Activated CD8-positive, alpha-beta T cell treated with anti-CD3 and anti-CD28 coated beads, Interleukin-2, amount 10 ng/mL, durations not matched to agents 7 days and 5 days (primary cell): ENCODE measurements at regions of chr6 and their contacts with region 1.

Region 1: GRCh38 chr6:26216356-26216885 is 129.2 kb downstream of the HFE start:
- DNase-seq: peak; percentile 93
- ATAC-seq: peak; percentile 67
- H3K4me3 Mint-ChIP-seq: no peak overlapping the region
- H3K27ac Mint-ChIP-seq: no peak overlapping the region
- H3K4me1 Mint-ChIP-seq: peaks cover 43% of the 10 kb centered on the region
- H3K27me3 Mint-ChIP-seq: no peaks in the 10 kb centered on the region

Region 2: DNA sequence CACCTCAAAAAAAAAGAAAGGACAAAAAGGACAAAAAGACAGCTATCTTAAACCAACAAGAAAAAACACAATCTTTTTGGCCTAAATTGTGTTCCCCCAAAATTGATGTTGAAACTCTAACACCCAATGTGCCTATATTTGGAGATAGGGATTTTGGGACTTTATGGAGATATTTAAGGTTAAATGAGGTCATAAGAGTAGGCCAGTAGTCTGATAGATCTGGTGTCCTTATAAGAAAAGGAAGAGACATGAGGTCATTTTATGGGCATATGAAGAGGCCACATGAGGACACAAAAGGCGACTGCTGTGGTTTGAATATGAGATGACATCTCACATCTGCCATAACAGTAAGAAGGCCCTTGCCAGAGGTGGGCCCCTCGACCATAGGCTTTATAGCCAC is 204.4 kb before region 1 on chr6:
- CTCF ChIA-PET with region 1: no interaction called
- POLR2A ChIA-PET with region 1: no interaction called
- DNase-seq: no peak
- ATAC-seq: no peak
- H3K4me3 Mint-ChIP-seq: no peak overlapping the region
- H3K27ac Mint-ChIP-seq: no peak overlapping the region
- H3K4me1 Mint-ChIP-seq: peaks cover 6% of the 10 kb centered on the region
- H3K27me3 Mint-ChIP-seq: no peaks in the 10 kb centered on the region

Region 3: DNA sequence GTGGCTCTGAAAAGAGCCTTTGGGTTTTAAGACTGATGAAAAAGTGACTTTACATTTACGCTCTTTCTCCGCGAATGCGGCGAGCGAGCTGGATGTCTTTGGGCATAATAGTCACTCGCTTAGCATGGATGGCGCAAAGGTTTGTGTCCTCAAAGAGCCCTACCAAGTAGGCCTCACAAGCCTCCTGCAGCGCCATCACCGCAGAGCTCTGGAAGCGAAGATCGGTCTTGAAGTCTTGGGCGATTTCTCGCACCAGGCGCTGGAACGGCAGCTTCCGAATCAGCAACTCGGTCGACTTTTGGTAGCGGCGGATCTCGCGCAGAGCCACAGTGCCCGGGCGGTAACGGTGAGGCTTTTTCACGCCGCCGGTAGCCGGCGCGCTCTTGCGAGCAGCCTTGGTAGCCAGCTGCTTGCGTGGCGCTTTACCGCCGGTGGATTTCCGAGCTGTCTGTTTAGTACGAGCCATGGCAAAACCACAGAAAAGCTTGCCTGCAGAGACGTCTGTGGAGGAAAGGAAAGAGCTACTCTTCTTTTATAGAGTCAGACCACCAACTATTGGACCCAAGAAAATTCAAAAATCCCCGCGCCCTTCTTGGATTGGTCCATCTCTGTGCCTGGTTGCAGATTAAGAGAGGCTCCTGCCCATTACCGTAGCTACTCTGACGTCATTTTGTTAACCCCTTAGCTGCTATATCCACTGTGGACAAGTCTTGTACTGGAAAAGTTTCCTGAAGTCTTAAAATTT is 184.7 kb before region 1 on chr6:
- CTCF ChIA-PET with region 1: no interaction called
- POLR2A ChIA-PET with region 1: interaction called, 90 read pairs
- DNase-seq: peak; percentile 97
- ATAC-seq: peak; percentile 66
- H3K4me3 Mint-ChIP-seq: peak overlapping the region; percentile 93
- H3K27ac Mint-ChIP-seq: peak overlapping the region; percentile 99
- H3K4me1 Mint-ChIP-seq: peaks cover 68% of the 10 kb centered on the region
- H3K27me3 Mint-ChIP-seq: peaks cover 3% of the 10 kb centered on the region

Region 4: GRCh38 chr6:26175428-26176181 is 40.8 kb before region 1 on chr6:
- CTCF ChIA-PET with region 1: interaction called, 16 read pairs
- POLR2A ChIA-PET with region 1: interaction called, 105 read pairs
- DNase-seq: peak; percentile 82
- ATAC-seq: peak; percentile 11
- H3K4me3 Mint-ChIP-seq: peak overlapping the region; percentile 38
- H3K27ac Mint-ChIP-seq: peak overlapping the region; percentile 59
- H3K4me1 Mint-ChIP-seq: peaks cover 42% of the 10 kb centered on the region
- H3K27me3 Mint-ChIP-seq: no peaks in the 10 kb centered on the region

Region 5: GRCh38 chr6:26204332-26205165 is 11.9 kb before region 1 on chr6:
- CTCF ChIA-PET with region 1: interaction called, 12 read pairs
- POLR2A ChIA-PET with region 1: interaction called, 2,224 read pairs
- DNase-seq: peak; percentile 95
- ATAC-seq: peak; percentile 66
- H3K4me3 Mint-ChIP-seq: no peak overlapping the region
- H3K27ac Mint-ChIP-seq: no peak overlapping the region
- H3K4me1 Mint-ChIP-seq: peaks cover 41% of the 10 kb centered on the region
- H3K27me3 Mint-ChIP-seq: no peaks in the 10 kb centered on the region

Region 6: GRCh38 chr6:26264547-26264946 is 48.1 kb after region 1 on chr6:
- CTCF ChIA-PET with region 1: no interaction called
- POLR2A ChIA-PET with region 1: interaction called, 232 read pairs
- DNase-seq: no peak
- ATAC-seq: no peak
- H3K4me3 Mint-ChIP-seq: no peak overlapping the region
- H3K27ac Mint-ChIP-seq: no peak overlapping the region
- H3K4me1 Mint-ChIP-seq: peaks cover 21% of the 10 kb centered on the region
- H3K27me3 Mint-ChIP-seq: no peaks in the 10 kb centered on the region

Region 7: DNA sequence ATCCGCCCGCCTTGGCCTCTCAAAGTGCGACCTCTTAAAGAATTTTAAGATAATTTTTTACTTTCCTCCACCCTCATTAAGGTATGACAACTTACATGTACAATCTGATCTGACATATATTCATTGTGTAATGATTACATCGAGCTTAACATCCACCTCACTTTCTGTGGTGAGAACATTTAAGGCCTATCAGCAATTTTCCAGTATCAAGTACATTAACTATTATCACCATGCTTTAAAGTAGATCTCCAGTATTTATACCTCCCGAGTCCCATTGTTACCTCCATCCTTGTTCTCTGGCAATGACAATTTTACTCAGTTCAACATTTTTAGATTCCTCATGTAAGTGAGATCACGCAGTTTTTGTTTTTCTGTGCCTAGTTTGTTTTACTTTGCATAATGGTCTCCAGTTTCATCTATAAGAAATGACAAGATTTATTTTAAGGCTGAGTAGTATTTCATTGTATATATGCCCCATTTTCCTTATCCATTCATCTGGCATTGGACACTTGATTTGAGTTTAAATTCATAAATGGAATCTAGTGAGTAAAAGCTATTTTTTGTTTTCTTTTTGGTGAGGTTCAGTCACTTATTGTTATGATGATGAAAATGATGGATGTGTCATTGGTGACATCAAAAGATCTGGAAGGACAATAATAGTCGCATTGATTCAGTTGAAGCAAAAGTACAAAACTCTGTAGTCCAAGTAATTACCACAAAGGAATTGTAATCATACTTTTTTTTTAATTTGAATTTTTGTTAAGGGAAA is 1608.8 kb after region 1 on chr6:
- CTCF ChIA-PET with region 1: no interaction called
- POLR2A ChIA-PET with region 1: interaction called, 12 read pairs
- DNase-seq: no peak
- ATAC-seq: peak; percentile 3
- H3K4me3 Mint-ChIP-seq: peak overlapping the region; percentile 93
- H3K27ac Mint-ChIP-seq: peak overlapping the region; percentile 99
- H3K4me1 Mint-ChIP-seq: peaks cover 45% of the 10 kb centered on the region
- H3K27me3 Mint-ChIP-seq: no peaks in the 10 kb centered on the region